Activated CD4-positive, alpha-beta T cell treated with anti-CD3 and anti-CD28 coated beads for 36 hours (primary cell): ENCODE measurements at regions of chr22 and their contacts with region 1.

Region 1: GRCh38 chr22:40636380-40637182 is at the start of gene MRTFA:
- DNase-seq: peak; percentile 100
- ATAC-seq: peak; percentile 96
- H3K4me3 Mint-ChIP-seq: peak within 1 kb of the TSS; percentile 85
- H3K27ac Mint-ChIP-seq: peak within 1 kb of the TSS; percentile 93
- H3K4me1 Mint-ChIP-seq: peaks cover 43% of the 10 kb centered on the region
- H3K27me3 Mint-ChIP-seq: no peaks in the 10 kb centered on the region
- total RNA-seq, gene MRTFA: 41.0 to 43.2 TPM

Region 2: DNA sequence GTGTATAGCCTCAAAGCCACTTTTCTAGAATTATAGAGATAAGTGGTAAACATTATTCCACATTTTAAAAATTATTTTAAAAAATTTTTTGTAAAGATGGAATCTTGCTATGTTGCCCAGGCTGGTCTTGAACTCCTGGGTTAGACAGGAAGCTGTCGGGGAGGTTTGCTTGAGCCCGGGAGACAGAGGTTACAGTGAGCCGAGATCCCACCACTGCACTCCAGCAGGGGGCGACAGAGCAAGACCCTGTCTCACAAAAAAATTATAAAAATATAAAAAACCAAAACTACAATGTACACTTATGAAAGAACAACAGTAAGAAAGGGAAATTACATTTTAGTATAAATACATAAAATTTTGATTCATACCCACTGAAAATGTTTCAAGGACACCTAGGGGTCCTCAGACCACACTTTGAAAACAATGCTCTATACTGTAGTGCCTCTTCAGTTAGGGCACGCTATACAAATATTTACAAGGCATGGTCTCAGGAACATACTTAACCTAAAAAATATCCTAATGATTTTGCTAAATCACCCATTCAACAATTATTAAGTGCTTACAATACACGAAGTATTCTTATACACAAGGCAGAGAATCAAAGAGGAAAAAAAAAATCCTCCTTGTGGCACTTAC is 111.2 kb before region 1 on chr22:
- CTCF ChIA-PET with region 1: interaction called, 16 read pairs
- POLR2A ChIA-PET with region 1: no interaction called
- intact Hi-C with region 1: loop called (anchors 2 kb)
- DNase-seq: peak; percentile 87
- ATAC-seq: peak; percentile 65
- H3K4me3 Mint-ChIP-seq: no peak overlapping the region
- H3K27ac Mint-ChIP-seq: peak overlapping the region; percentile 16
- H3K4me1 Mint-ChIP-seq: peaks cover 53% of the 10 kb centered on the region
- H3K27me3 Mint-ChIP-seq: no peaks in the 10 kb centered on the region

Region 3: DNA sequence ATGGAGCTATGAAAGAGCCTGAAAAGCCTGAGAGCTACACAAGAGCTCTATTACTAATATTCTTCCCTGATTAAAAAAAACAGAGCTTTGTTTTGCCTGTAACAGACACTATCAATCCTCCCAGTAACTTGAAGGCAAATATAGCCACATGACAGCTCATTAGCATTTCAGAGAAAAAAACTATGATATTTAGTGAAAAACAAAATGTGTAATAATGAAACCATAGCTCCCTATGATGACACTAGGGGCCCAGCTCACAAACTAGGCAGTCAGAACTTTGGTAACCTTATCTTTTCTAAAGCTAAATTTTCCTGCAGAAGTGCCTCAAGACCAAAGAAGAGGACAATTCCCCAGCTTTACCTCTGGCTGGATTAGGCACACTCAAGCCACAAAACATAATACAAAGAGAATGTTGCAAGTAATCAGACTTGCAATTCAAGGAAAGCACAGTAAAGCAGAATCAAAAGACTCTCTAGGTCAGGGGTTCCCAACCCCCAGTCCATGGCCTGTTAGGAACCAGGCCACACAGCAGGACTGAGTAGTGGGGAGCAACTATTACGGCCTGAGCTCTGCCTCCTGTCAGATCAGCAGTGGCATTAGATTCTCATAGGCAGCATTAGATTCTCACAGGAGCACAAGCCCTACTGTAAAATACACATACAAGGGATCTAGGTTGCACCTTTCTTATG is 53.4 kb before region 1 on chr22:
- CTCF ChIA-PET with region 1: interaction called, 4 read pairs
- POLR2A ChIA-PET with region 1: interaction called, 4 read pairs
- intact Hi-C with region 1: loop called in 1 of 2 experiments (anchors 1 kb)
- DNase-seq: peak; percentile 42
- ATAC-seq: peak; percentile 81
- H3K4me3 Mint-ChIP-seq: peak overlapping the region; percentile 17
- H3K27ac Mint-ChIP-seq: peak overlapping the region; percentile 80
- H3K4me1 Mint-ChIP-seq: peaks cover 35% of the 10 kb centered on the region
- H3K27me3 Mint-ChIP-seq: no peaks in the 10 kb centered on the region

Region 4: GRCh38 chr22:40668611-40669411 is 32.2 kb after region 1 on chr22:
- CTCF ChIA-PET with region 1: no interaction called
- POLR2A ChIA-PET with region 1: no interaction called
- intact Hi-C with region 1: no loop called
- DNase-seq: peak; percentile 30
- ATAC-seq: peak; percentile 91
- H3K4me3 Mint-ChIP-seq: no peak overlapping the region
- H3K27ac Mint-ChIP-seq: peak overlapping the region; percentile 92
- H3K4me1 Mint-ChIP-seq: peaks cover 21% of the 10 kb centered on the region
- H3K27me3 Mint-ChIP-seq: no peaks in the 10 kb centered on the region

Region 5: DNA sequence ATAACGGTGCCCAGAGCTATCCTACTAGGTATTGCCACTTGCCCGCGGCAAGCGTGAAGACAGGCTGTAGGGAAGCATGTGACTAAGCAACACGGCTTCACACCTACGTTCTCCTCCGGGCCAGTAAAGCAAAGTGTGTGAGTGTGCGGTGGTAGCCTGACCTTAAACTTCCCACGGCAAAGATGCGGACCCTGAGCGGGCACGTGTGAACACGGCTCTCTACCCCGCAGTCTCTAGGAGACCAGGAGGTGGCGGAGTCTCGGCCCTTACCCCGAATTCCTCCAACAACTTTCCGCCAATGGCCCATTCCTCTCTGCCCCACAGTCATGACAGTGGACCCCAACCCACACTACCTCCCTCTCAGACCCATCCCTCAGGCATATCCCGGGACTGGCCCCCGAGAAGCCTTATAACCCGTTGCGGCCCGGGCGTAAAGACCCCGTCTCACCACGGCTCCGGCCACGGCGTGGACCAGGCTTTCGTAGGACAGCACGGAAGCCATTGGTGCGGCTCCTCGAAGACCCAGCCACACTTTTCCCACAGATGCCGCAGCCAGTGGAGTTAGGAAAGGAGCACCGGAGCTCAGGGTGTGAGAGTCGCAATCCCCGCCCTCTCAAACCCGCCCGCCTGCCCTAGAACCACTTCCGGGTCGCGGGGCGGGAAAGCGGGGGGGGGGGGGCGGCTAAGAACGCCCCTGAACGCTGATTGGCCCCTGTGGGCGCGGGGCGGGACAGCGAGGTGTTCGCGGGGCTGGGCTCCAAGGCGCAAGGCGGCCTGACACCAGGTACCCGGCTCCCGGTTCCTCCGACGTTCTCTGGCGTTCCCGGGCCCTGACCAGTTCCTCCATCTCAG is 182.4 kb after region 1 on chr22 and contains the start of gene SLC25A17:
- CTCF ChIA-PET with region 1: interaction called, 3 read pairs
- POLR2A ChIA-PET with region 1: no interaction called
- intact Hi-C with region 1: loop called in 1 of 2 experiments (anchors 1 kb)
- DNase-seq: peak; percentile 93
- ATAC-seq: peak; percentile 93
- H3K4me3 Mint-ChIP-seq: peak within 1 kb of the TSS; percentile 88
- H3K27ac Mint-ChIP-seq: peak within 1 kb of the TSS; percentile 92
- H3K4me1 Mint-ChIP-seq: peaks cover 30% of the 10 kb centered on the region
- H3K27me3 Mint-ChIP-seq: no peaks in the 10 kb centered on the region
- total RNA-seq, gene SLC25A17: 23.3 to 29.7 TPM